CD4-positive, alpha-beta memory T cell (primary cell): ENCODE measurements at regions of chr7 and their contacts with region 1.

Region 1: GRCh38 chr7:99558306-99559174 is at the start of gene ZNF655:
- DNase-seq: peak; percentile 92 to 95 (median 92)
- H3K4me3 ChIP-seq: peak within 1 kb of the TSS; percentile 76 to 97
- H3K4me3 Mint-ChIP-seq: peak within 1 kb of the TSS; percentile 91 to 100 (median 98)
- H3K27ac ChIP-seq: peak within 1 kb of the TSS; percentile 98
- H3K27ac Mint-ChIP-seq: peak within 1 kb of the TSS; percentile 96 to 99 (median 99)
- H3K4me1 ChIP-seq: peaks cover 43% of the 10 kb centered on the region
- H3K4me1 Mint-ChIP-seq: peaks cover 27 to 56% (median 42%) of the 10 kb centered on the region in 4 donors
- H3K27me3 ChIP-seq: no peaks in the 10 kb centered on the region
- H3K27me3 Mint-ChIP-seq: no peaks in the 10 kb centered on the region
- total RNA-seq, gene ZNF655: 137 to 150 TPM

Region 2: DNA sequence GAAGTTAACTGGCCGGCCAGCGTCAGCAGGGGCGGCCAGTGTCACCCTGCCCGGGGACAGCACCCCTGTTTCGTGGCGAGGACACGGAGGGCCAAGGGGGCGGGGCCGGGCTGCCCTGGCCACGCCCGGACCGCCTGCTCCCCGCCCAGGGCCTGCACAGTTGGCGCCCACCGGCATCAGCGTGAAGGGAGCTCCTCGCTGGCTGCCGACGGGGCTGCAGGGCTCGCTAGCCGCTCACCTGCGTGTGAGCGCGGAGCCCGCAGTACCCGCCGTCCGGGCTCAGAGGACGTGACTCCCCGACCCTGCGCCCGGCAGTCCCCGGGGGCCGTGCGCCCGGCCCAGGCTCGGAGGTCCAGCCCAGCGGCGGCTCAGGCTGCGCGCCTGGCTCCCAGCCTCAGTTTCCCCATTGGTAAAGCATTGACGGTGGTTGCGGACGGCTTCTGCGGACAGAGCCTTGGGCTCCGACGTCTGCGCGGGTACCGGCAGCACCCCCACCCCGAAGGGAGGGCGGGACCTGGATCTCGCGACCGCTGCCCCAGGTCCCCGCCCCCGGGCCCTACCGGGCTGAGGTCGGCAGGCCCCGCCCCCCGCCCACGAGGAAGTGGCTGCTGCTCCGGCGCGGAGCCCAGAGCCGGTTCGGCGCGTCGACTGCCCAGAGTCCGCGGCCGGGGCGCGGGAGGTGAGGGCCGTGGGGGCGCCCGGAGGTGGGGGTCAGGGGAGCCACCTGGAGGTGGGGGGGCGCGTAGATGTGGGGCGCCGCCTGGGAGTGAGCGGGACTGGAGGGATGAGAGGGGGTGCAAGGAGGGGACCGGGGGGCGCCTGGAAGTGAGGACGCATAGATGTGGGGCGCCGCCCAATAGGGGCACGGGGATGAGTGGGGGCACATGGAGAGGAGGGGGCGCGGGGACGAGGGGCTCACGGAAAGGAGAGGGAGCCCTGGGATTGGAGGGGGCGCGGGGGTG is 184.2 kb before region 1 on chr7 and contains the start of gene ARPC1B:
- CTCF ChIA-PET with region 1: no interaction called
- POLR2A ChIA-PET with region 1: interaction called, 10 read pairs
- intact Hi-C with region 1: no loop called
- DNase-seq: peak; percentile 81 to 88 (median 81)
- H3K4me3 ChIP-seq: peak within 1 kb of the TSS; percentile 73 to 82
- H3K4me3 Mint-ChIP-seq: peak within 1 kb of the TSS; percentile 79 to 87 (median 81)
- H3K27ac ChIP-seq: peak within 1 kb of the TSS; percentile 87
- H3K27ac Mint-ChIP-seq: peak within 1 kb of the TSS; percentile 87 to 100 (median 98)
- H3K4me1 ChIP-seq: peaks cover 44% of the 10 kb centered on the region
- H3K4me1 Mint-ChIP-seq: peaks cover 13 to 42% (median 25%) of the 10 kb centered on the region in 4 donors
- H3K27me3 ChIP-seq: no peaks in the 10 kb centered on the region
- H3K27me3 Mint-ChIP-seq: no peaks in the 10 kb centered on the region
- total RNA-seq, gene ARPC1B: 188 to 191 TPM

Region 3: GRCh38 chr7:99465421-99465768 is 93.1 kb before region 1 on chr7:
- CTCF ChIA-PET with region 1: no interaction called
- POLR2A ChIA-PET with region 1: interaction called, 12 read pairs
- intact Hi-C with region 1: no loop called
- DNase-seq: no peak
- H3K4me3 ChIP-seq: peak overlapping the region; percentile 78 to 83
- H3K4me3 Mint-ChIP-seq: peak overlapping the region; percentile 90 to 97 (median 96)
- H3K27ac ChIP-seq: peak overlapping the region; percentile 78
- H3K27ac Mint-ChIP-seq: peak overlapping the region; percentile 79 to 98 (median 95)
- H3K4me1 ChIP-seq: peaks cover 47% of the 10 kb centered on the region
- H3K4me1 Mint-ChIP-seq: peaks cover 19 to 52% (median 30%) of the 10 kb centered on the region in 4 donors
- H3K27me3 ChIP-seq: no peaks in the 10 kb centered on the region
- H3K27me3 Mint-ChIP-seq: no peaks in the 10 kb centered on the region

Region 4: DNA sequence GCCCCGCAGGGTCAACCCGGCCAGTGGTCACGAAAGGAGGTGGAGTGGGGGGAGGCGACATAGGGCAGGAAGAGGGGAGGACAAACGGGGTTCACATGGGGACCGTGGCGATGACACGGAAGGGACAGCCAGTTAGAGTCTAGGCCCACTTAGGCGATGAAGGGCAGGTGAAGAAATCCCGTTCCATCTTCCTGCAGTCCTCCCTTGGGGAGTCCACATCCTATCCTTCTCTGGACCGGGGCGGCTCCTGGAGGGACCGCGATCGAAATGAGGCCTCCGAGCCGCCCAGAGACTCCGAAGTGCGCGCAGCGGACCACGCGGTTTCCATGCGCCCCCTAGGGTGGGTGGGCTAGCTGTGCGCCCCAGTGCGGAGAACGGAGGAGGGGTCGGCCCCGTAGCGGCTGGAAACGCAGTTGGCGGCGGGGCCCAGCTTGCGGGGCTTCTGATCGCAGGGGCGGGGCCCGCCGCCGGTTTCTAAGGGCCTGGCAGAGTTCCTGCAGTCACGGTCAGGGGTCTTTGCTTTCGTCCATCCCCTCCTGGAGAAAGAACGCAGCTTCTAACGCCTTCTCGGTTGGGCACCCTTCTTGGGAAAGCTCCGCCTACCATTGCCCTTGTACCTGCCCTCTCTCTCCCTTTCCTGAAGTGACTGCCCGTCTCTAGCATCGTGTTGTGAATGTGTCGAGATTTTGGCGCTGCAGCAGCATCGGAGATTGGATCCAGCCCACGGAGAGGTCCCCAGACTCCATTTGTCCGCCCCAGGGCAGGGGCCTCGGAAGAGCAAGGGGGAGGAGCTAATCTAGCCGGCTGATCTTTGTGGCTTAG is 21.6 kb after region 1 on chr7:
- CTCF ChIA-PET with region 1: interaction called, 5 read pairs
- POLR2A ChIA-PET with region 1: interaction called, 24 read pairs
- intact Hi-C with region 1: no loop called
- DNase-seq: peak; percentile 38 to 59 (median 44)
- H3K4me3 ChIP-seq: peak overlapping the region; percentile 52 to 59
- H3K4me3 Mint-ChIP-seq: peak overlapping the region; percentile 85 to 96 (median 92)
- H3K27ac ChIP-seq: peak overlapping the region; percentile 23
- H3K27ac Mint-ChIP-seq: peak overlapping the region; percentile 2 to 95 (median 89)
- H3K4me1 ChIP-seq: peaks cover 10% of the 10 kb centered on the region
- H3K4me1 Mint-ChIP-seq: peaks cover 9 to 20% (median 13%) of the 10 kb centered on the region in 4 donors
- H3K27me3 ChIP-seq: no peaks in the 10 kb centered on the region
- H3K27me3 Mint-ChIP-seq: no peaks in the 10 kb centered on the region

Region 5: GRCh38 chr7:99624484-99624883 is 65.9 kb after region 1 on chr7:
- CTCF ChIA-PET with region 1: no interaction called
- POLR2A ChIA-PET with region 1: interaction called, 25 read pairs
- intact Hi-C with region 1: no loop called
- DNase-seq: peak; percentile 74 to 84 (median 80)
- H3K4me3 ChIP-seq: peak overlapping the region in 1 of 2 donors; percentile 27
- H3K4me3 Mint-ChIP-seq: peak overlapping the region; percentile 78 to 94 (median 87)
- H3K27ac ChIP-seq: peak overlapping the region; percentile 61
- H3K27ac Mint-ChIP-seq: peak overlapping the region; percentile 86 to 99 (median 96)
- H3K4me1 ChIP-seq: peaks cover 27% of the 10 kb centered on the region
- H3K4me1 Mint-ChIP-seq: peaks cover 28 to 56% (median 43%) of the 10 kb centered on the region in 4 donors
- H3K27me3 ChIP-seq: no peaks in the 10 kb centered on the region
- H3K27me3 Mint-ChIP-seq: no peaks in the 10 kb centered on the region